Ascending aorta (tissue), 2 donors: ENCODE measurements at regions of chr11 and their contacts with region 1.

Region 1: GRCh38 chr11:19561011-19561410 is 151.6 kb upstream of the NAV2 start:
- DNase-seq: peak in 1 of 2 donors; percentile 42
- H3K4me3 ChIP-seq: no peak overlapping the region
- H3K27ac ChIP-seq: no peak overlapping the region
- H3K4me1 ChIP-seq: peaks cover 0 to 13% of the 10 kb centered on the region in 2 donors
- H3K27me3 ChIP-seq: no peaks in the 10 kb centered on the region
- CTCF ChIP-seq: no peak

Region 2: GRCh38 chr11:18368221-18368620 is 1192.8 kb before region 1 on chr11:
- intact Hi-C with region 1: no loop called
- DNase-seq: no peak
- H3K4me3 ChIP-seq: no peak overlapping the region
- H3K27ac ChIP-seq: no peak overlapping the region
- H3K4me1 ChIP-seq: no peaks in the 10 kb centered on the region
- H3K27me3 ChIP-seq: no peaks in the 10 kb centered on the region
- CTCF ChIP-seq: no peak

Region 3: DNA sequence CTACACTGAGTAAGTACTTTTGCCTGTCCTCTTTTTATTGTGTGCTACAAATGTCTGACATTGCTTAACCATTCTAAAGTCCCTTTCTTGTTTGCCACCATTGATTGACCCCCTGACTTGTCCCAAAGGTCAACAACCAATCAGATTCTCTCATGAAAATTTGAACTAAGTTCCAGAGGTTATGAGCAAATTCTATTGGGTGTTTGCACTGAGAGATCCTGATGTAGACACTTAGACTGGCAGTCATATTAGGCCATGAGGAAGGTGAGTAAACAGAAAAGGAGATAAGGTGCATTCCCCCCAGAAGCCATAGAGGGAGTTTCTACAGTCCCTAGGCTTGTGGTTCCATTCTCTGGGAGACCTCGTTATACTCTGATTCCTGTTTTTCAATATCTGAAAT is 219.0 kb before region 1 on chr11:
- intact Hi-C with region 1: no loop called
- DNase-seq: no peak
- H3K4me3 ChIP-seq: no peak overlapping the region
- H3K27ac ChIP-seq: no peak overlapping the region
- H3K4me1 ChIP-seq: peaks cover 6 to 10% of the 10 kb centered on the region in 2 donors
- H3K27me3 ChIP-seq: peaks cover 11% of the 10 kb centered on the region
- CTCF ChIP-seq: no peak

Region 4: DNA sequence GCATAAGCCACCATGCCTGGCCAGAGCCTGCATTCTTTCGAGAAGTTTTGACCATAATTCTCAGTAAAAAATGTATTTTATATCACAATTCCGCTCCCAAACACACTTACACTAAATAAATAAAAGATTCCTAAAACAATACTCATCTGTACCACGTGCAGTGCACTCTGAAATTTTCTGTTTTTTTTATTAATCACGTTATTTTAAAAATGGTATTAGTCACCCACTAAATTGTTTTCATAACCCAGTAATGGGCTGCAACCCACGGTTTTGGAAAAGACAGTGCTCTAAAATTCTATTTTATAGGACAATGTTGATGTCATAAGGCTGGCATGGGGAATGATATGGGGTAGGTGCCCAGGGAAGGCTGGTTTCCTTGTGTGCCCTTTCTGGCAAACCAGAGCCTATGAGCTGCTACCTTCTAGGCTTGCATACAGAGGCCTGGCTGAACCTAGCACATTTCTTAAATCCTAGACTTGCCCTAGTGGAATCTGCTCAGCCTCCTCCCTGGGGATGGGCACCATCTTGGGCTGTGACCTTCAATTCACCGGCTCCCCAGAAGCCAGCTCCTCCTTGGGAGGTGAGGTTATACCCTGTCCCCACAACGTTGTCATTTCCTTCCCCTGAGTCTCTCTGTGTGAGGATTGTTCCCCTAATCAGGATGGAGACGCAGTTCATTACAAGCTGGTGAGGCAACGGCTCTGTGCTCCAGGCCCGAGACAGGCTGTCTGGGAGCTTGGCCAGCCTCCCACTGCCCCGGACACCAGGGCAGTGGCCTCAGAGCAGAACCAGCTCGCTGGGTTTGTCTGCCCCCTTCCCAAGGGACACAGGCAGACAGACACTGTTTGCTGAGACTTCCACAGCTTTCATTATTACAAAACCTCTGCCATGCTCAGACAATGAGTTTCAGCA is 35.1 kb after region 1 on chr11:
- intact Hi-C with region 1: loop called (anchors 1 kb)
- DNase-seq: peak; percentile 64 to 95
- H3K4me3 ChIP-seq: peak overlapping the region in 1 of 2 donors; percentile 60
- H3K27ac ChIP-seq: peak overlapping the region; percentile 82 to 93
- H3K4me1 ChIP-seq: peaks cover 18 to 46% of the 10 kb centered on the region in 2 donors
- H3K27me3 ChIP-seq: no peaks in the 10 kb centered on the region
- CTCF ChIP-seq: no peak

Region 5: DNA sequence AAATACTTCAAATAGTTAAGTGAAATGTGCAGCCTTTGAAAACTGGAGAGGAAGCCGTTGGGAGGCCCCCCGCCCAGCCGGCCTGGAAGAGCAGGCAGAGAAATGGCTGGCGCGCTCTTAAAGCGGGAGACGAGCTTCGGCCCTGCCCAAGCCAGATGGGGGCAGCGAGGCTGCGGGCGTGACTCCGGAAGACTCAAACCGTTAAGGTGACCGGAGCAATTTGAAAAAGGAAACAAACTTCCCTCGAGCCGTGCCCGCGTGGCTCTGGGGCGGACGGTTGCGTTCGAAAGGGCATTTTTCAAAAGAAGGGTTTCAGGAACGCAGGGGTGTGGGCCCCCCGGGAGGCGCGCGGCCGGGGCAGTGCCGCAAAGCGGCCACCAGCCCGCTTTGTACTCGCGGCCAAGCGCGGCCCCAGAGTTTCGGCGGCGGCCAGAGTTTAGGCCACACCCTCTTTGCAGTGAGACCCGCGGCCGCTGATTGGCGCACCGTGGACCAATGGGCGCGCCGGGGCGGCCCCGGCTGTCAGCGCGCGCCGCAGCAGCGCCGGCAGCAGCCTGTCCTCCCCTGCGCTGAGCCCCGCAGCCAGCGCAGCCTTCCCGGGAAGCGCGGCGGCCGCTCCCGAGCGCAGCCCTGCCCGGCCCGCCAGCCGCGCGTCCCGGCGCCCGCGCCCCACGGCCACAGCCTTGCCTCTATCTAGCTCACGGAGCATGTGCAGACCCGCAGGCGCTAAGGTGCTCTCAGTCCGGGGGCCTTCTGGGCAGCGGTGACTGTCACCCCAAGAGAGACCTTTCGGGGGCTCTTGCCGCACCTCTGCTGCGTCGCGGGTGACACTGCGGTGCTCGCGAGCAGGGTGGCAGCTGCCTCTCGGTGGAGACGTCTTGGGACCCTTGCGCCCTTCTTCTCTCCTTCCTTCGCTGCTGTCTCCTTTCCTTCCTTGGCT is 151.5 kb after region 1 on chr11 and contains the start of gene NAV2:
- intact Hi-C with region 1: loop called (anchors 1 kb)
- DNase-seq: peak; percentile 80 to 95
- H3K4me3 ChIP-seq: peak within 1 kb of the TSS; percentile 92 to 98
- H3K27ac ChIP-seq: peak within 1 kb of the TSS; percentile 97 to 98
- H3K4me1 ChIP-seq: peaks cover 0 to 16% of the 10 kb centered on the region in 2 donors
- H3K27me3 ChIP-seq: no peaks in the 10 kb centered on the region
- CTCF ChIP-seq: peak in 1 of 3 experiments; percentile 9
- total RNA-seq, gene NAV2: 62.6 TPM

Region 6: GRCh38 chr11:19742588-19743292 is 181.7 kb after region 1 on chr11:
- intact Hi-C with region 1: loop called (anchors 1 kb)
- DNase-seq: peak in 1 of 2 donors; percentile 86
- H3K4me3 ChIP-seq: no peak overlapping the region
- H3K27ac ChIP-seq: peak overlapping the region; percentile 47 to 49
- H3K4me1 ChIP-seq: peaks cover 7 to 43% of the 10 kb centered on the region in 2 donors
- H3K27me3 ChIP-seq: no peaks in the 10 kb centered on the region
- CTCF ChIP-seq: peak; percentile 70 to 89 (median 86)

Region 7: DNA sequence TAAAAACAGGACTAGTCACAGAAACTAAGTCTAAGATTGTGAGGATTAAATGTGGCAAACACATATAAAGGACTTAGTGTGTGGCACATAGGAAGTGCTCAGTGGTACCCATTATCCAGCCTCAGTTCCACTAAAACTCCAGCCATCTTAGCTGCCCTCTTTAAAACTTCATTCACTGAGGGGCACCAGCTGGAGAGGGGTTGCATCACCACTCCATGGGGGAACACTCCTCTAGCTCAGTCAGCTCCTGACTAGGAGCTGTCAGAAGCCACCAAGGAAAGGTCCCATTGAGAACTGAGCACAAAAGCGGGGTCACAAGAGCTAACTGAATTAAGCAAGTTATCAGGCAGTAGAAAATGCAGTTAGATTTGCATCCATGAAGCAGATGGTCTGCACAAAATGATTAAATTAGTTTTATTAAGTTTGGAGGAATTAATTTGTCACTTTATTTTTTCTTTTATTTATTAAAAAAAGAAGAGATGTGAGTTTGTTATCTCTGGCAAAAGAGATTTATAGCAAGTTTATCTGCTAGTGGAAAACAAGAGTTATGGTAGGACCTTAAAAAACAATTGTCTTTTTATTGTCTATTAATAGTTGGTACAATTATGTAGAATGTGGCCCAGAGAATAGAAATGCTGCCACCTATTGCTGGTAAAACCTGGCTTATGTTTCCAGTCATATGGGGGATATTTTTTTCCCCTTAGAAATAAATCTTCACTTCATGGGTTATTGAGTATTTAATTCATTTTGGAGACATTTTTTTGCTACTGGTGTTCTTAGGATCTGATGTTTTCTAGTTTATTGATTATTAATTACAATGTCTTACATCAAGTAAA is 247.3 kb after region 1 on chr11:
- intact Hi-C with region 1: loop called (anchors 5 kb)
- DNase-seq: no peak
- H3K4me3 ChIP-seq: no peak overlapping the region
- H3K27ac ChIP-seq: no peak overlapping the region
- H3K4me1 ChIP-seq: peaks cover 2 to 38% of the 10 kb centered on the region in 2 donors
- H3K27me3 ChIP-seq: no peaks in the 10 kb centered on the region
- CTCF ChIP-seq: no peak

Region 8: DNA sequence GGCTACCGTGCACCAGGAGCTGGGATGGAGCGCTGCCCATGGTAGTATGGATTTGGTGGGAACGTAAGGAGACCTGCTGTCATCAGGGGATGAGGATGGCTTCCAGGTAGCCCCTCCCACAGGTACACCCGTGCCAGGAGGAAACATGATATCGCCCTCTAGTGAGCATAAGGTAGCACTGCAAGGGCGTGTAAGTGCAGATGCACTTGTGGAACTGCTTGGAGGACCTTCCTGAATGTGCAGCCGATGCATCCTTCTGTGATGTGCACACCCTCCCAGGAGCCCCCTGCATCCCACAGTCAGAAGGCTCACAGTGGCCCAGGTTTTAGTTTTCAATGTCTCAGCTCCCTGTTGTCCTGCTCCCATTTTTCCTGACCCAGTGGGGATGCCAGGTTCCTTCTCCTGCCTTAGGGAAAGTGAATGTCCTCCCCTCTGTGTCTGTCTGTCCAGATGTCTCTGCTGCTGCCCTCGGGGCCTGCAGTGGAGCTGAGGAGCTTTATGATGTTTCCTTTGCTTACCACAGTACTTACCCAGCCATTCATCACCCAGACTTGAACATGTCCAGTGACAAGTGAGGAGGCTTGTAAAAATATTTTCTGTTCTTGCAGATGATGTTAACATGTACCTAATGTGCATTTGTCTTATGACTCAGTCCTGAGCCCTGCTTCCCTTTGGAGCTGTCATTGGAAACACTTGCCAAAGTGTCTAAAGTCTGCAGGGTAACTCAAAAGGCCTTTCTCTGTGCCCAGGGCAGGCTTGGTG is 550.1 kb after region 1 on chr11:
- intact Hi-C with region 1: loop called (anchors 10 kb)
- DNase-seq: no peak
- H3K4me3 ChIP-seq: no peak overlapping the region
- H3K27ac ChIP-seq: peak overlapping the region; percentile 73 to 85
- H3K4me1 ChIP-seq: peaks cover 20 to 51% of the 10 kb centered on the region in 2 donors
- H3K27me3 ChIP-seq: no peaks in the 10 kb centered on the region
- CTCF ChIP-seq: peak; percentile 35 to 80 (median 66)